ENCODE measurements at regions of chr5 and their contacts with region 1.

Region 1: DNA sequence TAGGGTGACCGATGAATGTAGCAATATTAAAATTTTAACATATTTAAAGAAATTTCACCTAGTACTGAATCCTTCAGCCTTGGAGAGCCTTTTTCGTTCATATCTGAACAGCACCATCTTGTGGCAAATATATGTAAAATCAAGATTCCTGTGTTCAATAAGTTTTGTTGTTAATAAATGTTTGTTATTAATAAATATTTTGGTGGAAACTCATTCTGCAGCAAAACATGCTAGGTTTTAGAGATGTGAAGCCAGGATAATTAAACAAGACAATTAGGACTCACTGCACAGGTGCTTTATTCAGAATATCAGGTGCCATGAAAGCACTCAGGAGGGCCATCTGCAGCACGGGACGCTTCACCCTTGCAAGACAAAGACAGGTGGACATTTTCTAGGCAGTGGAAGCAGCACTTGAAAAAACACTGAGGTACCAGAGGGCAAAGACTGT is 15.7 kb downstream of the TICAM2 start:
- DNase-seq: peak; percentile 77
- H3K4me3 ChIP-seq: no peak overlapping the region
- H3K27ac ChIP-seq: no peak overlapping the region
- H3K4me1 ChIP-seq: peaks cover 15% of the 10 kb centered on the region
- H3K27me3 ChIP-seq: no peaks in the 10 kb centered on the region

Region 2: DNA sequence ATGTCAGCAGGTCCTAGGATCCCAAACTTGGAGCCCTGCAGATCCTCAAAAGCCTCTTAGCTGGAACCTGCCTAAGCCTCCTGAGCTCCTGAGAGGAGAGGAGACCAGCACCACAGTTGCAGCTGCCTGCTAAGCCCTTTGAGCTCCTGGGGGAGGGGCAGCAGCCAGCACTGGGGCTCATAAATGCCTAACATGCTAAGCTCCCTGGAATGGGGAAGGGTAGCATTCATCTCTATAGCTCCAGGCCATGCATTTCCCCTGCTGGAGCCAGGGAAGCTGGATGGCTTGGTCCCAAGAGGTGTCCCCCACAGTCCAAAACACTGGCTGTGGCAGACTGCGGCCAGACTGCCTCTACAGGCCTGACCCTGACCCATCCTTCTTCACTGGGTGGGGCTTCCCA is 1042.1 kb before region 1 on chr5:
- in situ Hi-C with region 1: no loop called
- DNase-seq: no peak
- H3K4me3 ChIP-seq: no peak overlapping the region
- H3K27ac ChIP-seq: no peak overlapping the region
- H3K4me1 ChIP-seq: no peaks in the 10 kb centered on the region
- H3K27me3 ChIP-seq: no peaks in the 10 kb centered on the region

Region 3: DNA sequence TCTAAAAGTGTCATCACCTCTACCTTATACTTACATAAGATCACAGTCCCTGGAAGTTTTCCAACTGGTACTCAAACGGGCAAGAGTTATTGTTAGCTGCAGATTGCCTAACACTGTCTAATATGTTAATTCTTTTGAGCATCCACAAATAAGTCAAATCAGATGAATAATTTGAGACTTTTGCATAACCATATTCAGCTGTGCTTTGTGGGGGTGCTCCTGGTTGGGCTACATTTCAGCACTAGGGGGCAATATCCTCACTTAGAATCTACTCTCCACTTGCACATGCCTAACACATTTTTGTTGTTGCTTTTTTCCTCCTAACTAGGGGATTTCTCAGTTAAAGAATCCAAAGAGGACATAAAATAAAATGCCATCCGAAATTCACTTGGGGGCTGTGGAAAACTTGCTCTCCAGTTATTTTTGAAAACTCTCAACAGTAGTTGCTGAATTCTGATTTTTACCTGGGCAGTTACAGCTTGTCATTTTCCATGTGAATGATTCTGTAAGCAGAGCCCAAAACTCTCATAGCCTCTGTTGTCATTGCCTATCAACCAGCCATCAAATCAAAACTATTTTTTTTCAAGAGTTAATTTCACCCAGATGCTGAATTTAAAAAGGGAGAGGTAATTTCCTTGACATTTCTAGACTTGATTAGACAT is 488.5 kb before region 1 on chr5:
- in situ Hi-C with region 1: loop called (anchors 25 kb)
- DNase-seq: peak; percentile 70
- H3K4me3 ChIP-seq: no peak overlapping the region
- H3K27ac ChIP-seq: no peak overlapping the region
- H3K4me1 ChIP-seq: no peaks in the 10 kb centered on the region
- H3K27me3 ChIP-seq: peaks cover 10% of the 10 kb centered on the region; the same call in 1 of the 2 replicates

Region 4: DNA sequence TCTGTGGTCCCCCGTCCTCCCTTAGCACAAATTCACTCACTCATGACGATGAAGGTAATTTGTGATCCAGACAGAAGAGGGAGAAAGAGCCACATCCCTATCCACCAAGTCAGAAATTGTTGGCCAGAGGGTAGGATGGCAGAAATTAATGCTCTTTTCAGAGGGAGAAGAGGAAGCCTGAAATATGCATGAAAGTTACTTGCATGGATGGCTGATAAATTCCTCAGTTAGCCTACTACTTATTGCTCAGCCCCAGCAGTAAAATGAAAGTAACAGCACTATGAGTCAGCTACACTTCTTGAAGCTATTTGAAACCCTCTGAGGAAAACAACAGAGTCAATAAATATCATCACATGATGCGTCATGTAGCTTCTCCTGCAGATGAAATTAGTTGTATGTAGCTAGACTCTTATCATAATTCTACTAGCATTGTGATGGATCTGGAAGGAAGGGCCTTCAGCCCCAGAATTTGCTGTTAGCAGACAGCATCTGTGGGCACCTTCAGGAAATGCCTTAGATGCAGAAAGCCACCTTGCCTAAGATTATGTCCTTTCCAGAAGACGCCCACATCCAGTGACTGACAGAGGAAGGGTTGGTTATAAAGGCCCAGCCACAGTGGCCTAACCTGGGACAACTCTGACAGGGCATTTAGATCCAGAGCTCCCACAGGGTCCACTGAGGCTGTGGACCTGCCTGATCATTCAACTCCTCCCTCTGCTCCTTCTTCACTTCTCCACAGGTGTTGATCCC is 209.0 kb before region 1 on chr5:
- in situ Hi-C with region 1: no loop called
- DNase-seq: peak; percentile 94
- H3K4me3 ChIP-seq: peak overlapping the region; percentile 39
- H3K27ac ChIP-seq: peak overlapping the region; percentile 35
- H3K4me1 ChIP-seq: peaks cover 19% of the 10 kb centered on the region
- H3K27me3 ChIP-seq: no peaks in the 10 kb centered on the region

Region 5: DNA sequence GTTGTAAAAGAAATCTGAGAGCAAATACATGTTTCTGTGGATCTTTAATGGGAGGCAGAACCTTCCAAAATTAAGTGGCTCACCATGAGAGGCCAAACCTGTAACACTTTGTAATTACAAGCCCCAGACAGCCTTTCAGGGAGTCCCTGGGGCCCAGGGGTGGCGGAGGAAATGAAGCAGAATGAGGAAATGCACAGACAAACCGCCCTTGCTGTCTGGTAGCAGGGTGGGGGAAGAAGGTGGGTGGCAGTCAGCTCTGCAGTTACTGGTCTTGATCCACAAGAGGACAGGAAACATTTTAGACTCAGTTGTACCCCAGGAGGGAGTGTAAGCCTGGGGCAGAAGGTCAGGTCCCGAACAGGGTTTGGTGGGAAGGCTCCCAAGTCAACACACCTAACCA is 452.2 kb after region 1 on chr5:
- in situ Hi-C with region 1: no loop called
- DNase-seq: no peak
- H3K4me3 ChIP-seq: no peak overlapping the region
- H3K27ac ChIP-seq: no peak overlapping the region
- H3K4me1 ChIP-seq: no peaks in the 10 kb centered on the region
- H3K27me3 ChIP-seq: no peaks in the 10 kb centered on the region